BJ (cell line): ENCODE measurements at regions of chr11 and their contacts with region 1.

Region 1: GRCh38 chr11:47750725-47751124 is 16.4 kb downstream of the FNBP4 start:
- DNase-seq: no peak
- H3K4me3 ChIP-seq: no peak overlapping the region
- H3K27me3 ChIP-seq: no peaks in the 10 kb centered on the region
- CTCF ChIP-seq: no peak

Region 2: GRCh38 chr11:47724041-47724729 is 26.5 kb before region 1 on chr11:
- CTCF ChIA-PET with region 1: no interaction called
- POLR2A ChIA-PET with region 1: interaction called, 12 read pairs
- DNase-seq: no peak
- H3K4me3 ChIP-seq: no peak overlapping the region
- H3K27me3 ChIP-seq: no peaks in the 10 kb centered on the region
- CTCF ChIP-seq: no peak

Region 3: DNA sequence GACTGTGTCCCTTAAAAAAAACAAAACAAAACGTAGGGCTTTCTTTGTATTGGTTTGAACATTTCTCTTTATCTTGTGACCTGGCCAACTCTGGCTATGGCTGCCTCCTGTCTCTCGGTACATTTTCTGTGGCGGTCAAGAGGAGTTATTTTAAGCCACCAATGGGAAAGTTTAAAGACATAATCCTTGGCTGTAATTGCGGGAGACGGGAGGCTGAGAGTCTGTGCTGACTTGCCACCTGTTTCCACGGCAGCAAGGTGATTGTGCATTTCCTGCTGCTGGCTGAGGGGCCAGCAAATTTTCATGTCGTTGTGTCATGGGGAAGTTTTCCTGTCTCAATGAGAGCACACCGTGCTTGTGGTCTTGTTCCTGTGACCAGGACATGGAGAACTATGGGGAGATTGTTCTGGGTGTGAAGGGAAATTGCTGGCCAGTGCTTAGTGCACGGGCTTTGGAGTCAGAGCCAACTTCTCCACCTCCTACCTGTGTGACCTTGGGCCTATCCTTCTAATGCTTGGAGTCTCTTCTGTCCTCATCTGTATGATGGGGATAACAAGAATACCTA is 240.6 kb after region 1 on chr11:
- CTCF ChIA-PET with region 1: no interaction called
- POLR2A ChIA-PET with region 1: no interaction called
- DNase-seq: no peak
- H3K4me3 ChIP-seq: no peak overlapping the region
- H3K27me3 ChIP-seq: no peaks in the 10 kb centered on the region
- CTCF ChIP-seq: no peak